Psoas muscle (tissue), 8 donors: ENCODE measurements at regions of chr21 and their contacts with region 1.

Region 1: DNA sequence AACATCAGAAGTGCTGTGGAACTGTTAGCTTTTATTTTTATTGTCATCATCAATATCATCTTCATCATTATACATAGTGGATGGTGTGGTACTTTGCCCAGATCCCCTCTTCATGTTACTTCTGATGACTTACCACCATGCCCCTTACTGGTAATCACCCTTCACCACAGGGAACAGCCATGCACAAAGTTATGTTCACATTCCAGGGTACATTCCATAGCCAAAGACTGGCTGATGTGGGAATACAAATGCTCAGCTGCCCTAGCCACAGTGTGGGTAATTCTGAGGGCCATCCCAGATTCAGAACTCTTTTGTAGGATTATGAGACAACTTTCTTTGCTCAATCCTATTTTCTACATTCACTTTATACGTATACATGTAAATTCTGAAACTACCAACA is 691.3 kb upstream of the CXADR start:
- DNase-seq: no peak
- ATAC-seq: no peak
- H3K4me3 ChIP-seq: no peak overlapping the region
- H3K27ac ChIP-seq: no peak overlapping the region
- H3K4me1 ChIP-seq: no peaks in the 10 kb centered on the region
- H3K27me3 ChIP-seq: no peaks in the 10 kb centered on the region
- CTCF ChIP-seq: no peak

Region 2: DNA sequence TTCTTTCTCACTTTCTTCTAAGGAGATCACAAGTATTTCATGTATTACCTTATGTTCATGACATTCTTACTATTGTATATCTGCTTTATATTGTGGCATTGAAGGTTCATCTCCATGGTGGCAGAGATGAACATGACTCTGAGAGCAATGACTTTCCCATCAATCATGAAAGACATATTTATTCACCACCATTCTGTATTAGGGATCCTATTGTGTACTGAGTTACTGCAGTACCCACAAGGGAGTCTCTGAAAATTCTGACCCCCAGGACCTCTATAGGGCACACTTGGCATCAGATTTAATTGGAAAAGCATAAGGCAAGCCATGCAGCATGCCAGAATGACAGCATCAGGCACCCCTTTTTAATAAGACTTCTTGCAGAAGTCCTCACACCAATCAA is 1019.5 kb after region 1 on chr21:
- intact Hi-C with region 1: loop called in 1 of 2 experiments (anchors 5 kb)
- DNase-seq: no peak
- ATAC-seq: no peak
- H3K4me3 ChIP-seq: no peak overlapping the region
- H3K27ac ChIP-seq: no peak overlapping the region
- H3K4me1 ChIP-seq: no peaks in the 10 kb centered on the region
- H3K27me3 ChIP-seq: no peaks in the 10 kb centered on the region
- CTCF ChIP-seq: no peak